Pancreas (tissue), 10 donors: ENCODE measurements at regions of chr7 and their contacts with region 1.

Region 1: DNA sequence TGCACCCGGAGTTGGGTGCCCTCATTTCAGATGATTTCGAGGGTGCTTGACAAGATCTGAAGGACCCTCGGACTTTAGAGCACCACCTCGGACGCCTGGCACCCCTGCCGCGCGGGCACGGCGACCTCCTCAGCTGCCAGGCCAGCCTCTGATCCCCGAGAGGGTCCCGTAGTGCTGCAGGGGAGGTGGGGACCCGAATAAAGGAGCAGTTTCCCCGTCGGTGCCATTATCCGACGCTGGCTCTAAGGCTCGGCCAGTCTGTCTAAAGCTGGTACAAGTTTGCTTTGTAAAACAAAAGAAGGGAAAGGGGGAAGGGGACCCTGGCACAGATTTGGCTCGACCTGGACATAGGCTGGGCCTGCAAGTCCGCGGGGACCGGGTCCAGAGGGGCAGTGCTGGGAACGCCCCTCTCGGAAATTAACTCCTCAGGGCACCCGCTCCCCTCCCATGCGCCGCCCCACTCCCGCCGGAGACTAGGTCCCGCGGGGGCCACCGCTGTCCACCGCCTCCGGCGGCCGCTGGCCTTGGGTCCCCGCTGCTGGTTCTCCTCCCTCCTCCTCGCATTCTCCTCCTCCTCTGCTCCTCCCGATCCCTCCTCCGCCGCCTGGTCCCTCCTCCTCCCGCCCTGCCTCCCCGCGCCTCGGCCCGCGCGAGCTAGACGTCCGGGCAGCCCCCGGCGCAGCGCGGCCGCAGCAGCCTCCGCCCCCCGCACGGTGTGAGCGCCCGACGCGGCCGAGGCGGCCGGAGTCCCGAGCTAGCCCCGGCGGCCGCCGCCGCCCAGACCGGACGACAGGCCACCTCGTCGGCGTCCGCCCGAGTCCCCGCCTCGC is at the start of gene EGFR:
- DNase-seq: peak; percentile 83 to 92 (median 88)
- ATAC-seq: peak; percentile 72 to 84 (median 82)
- H3K4me3 ChIP-seq: peak within 1 kb of the TSS; percentile 61 to 97 (median 86)
- H3K27ac ChIP-seq: peak within 1 kb of the TSS; percentile 89 to 93 (median 92)
- H3K4me1 ChIP-seq: peaks cover 0 to 7% (median 0%) of the 10 kb centered on the region in 3 donors
- H3K27me3 ChIP-seq: no peaks in the 10 kb centered on the region
- CTCF ChIP-seq: no peak
- total RNA-seq, gene EGFR: 25.6 to 38.8 (median 34.8) TPM

Region 2: DNA sequence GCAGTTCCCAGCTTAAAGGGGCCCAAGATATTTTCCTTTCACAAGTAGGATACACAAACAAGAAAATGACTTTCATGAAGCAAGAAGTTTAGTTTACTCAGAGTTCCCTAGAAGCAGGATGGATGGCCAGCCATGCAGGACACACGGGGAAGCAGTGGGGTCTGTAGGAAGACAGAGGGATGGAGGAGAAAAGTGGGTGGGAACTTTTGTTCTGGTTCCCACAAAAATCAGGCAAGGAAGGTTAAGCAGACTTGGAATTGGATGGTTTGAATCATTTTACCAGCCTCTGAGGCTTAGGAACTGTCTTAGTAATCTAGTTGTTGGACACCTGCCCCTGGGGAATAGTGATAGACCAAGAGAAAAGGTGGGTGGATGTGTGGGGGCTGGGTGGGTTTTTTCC is 739.7 kb before region 1 on chr7:
- intact Hi-C with region 1: no loop called
- DNase-seq: no peak
- ATAC-seq: no peak
- H3K4me3 ChIP-seq: no peak overlapping the region
- H3K27ac ChIP-seq: no peak overlapping the region
- H3K4me1 ChIP-seq: no peaks in the 10 kb centered on the region
- H3K27me3 ChIP-seq: no peaks in the 10 kb centered on the region
- CTCF ChIP-seq: no peak

Region 3: DNA sequence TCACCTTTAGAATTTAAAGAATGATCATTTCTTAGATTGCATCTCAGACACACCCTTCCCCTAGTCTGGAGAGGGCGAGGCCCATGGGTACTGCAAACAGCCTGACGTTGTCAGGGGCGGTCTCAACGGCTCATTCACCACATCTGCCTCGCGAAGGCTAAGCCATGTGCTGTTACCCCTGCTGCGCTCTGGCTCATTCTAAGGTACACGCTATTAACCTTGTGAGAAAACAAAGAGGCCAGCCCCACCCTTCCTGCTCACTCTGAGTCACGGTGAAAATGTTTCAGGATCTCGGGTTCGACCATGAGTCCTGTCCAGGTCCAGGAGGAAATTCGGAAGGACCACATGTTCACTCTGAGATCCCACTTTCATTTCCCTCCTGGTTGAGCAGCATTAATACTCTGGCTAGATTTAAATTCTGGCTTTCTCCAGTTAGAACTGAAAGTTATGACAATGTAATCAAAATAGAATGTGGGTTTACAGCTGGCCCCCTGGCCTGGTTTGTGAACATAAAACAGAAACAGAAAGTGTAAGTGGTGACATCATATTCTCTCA is 55.4 kb after region 1 on chr7:
- intact Hi-C with region 1: loop called in 1 of 3 experiments (anchors 10 kb)
- DNase-seq: peak in 3 of 6 donors; percentile 25 to 41 (median 39)
- ATAC-seq: peak in 3 of 4 donors; percentile 37 to 46 (median 38)
- H3K4me3 ChIP-seq: no peak overlapping the region
- H3K27ac ChIP-seq: peak overlapping the region in 2 of 4 donors; percentile 30 to 31
- H3K4me1 ChIP-seq: peaks cover 20 to 50% (median 43%) of the 10 kb centered on the region in 3 donors
- H3K27me3 ChIP-seq: no peaks in the 10 kb centered on the region
- CTCF ChIP-seq: no peak

Region 4: DNA sequence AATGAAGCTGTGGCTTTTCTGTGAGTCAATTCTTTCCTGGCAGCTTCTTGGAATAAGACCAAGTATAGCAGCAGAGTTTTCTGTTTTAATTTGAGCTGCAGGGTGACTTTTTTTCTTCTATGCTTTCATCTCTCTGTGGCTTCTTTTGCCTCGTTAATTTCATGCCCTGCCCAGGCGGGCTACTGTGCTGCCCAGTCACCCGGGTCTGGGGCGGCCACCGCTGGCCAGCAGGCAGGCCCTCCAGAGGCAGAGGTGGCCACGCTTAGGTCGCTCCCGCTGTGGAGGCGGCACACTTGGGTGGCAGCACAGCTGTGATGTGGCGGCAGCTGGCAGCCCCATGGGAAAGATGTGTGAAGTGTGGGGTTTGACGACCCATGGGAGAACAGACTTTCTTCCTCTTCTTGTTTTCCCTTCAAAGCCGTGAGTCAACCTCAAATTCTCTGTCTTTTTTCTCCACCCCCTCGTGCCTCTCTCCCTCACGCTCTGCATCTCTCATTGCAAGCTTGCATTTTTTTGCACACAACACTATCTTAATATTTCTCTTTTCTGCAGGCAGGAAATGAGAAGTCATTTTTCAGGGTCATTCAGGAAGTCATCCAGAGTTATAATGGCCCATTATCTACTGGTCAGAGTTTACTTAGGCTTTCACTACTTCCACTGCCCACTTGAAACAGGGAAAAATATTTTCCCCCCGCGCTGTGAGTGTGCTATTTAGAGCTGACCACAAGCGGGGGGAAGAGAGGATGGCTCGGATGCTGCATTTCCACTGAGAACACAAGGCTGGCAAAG is 68.0 kb after region 1 on chr7:
- intact Hi-C with region 1: loop called in 1 of 3 experiments (anchors 10 kb)
- DNase-seq: peak in 3 of 6 donors; percentile 37 to 69 (median 65)
- ATAC-seq: peak; percentile 68 to 81 (median 79)
- H3K4me3 ChIP-seq: peak overlapping the region in 1 of 4 donors; percentile 19
- H3K27ac ChIP-seq: peak overlapping the region in 3 of 4 donors; percentile 66 to 83 (median 75)
- H3K4me1 ChIP-seq: peaks cover 24 to 44% (median 38%) of the 10 kb centered on the region in 3 donors
- H3K27me3 ChIP-seq: no peaks in the 10 kb centered on the region
- CTCF ChIP-seq: no peak

Region 5: DNA sequence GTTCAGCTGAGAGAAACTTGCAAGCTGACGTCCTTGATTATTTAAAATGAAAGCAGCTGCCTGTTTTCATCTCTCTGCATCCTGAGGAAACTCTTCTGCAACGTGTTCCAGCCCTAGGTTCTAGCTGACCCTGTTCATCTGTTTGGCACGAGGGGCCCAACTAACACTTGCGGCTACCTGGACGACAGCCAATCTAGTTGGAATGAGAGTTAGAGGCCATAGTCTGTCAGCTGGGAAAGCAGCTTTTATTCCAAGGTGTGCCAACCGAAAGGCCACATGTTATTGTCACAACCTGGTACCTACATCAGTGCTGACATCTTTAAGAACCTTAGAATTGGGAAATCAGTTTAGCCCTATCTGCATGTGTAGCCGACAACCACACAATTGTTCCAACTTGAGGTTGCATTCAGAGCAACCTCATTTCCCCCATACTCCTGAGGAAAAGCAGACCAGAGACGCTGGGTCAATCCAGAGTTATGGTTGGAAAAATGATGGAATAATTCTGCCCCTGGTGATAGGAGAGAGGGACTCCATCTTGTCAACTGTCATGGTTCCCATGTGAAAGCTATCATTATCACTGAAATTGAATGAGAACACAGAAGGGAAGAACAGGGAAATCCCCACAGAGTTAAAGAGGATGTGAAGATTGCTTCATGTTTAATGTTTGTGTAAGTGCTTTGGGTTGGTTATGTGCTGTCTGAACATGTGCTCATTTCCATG is 121.8 kb after region 1 on chr7:
- intact Hi-C with region 1: loop called in 1 of 3 experiments (anchors 10 kb)
- DNase-seq: no peak
- ATAC-seq: peak in 3 of 4 donors; percentile 42 to 49 (median 48)
- H3K4me3 ChIP-seq: no peak overlapping the region
- H3K27ac ChIP-seq: no peak overlapping the region
- H3K4me1 ChIP-seq: no peaks in the 10 kb centered on the region
- H3K27me3 ChIP-seq: no peaks in the 10 kb centered on the region
- CTCF ChIP-seq: no peak